Activated CD4-positive, alpha-beta T cell treated with anti-CD3 and anti-CD28 coated beads for 36 hours (primary cell): ENCODE measurements at regions of chr2 and their contacts with region 1.

Region 1: GRCh38 chr2:84856787-84857186 is 24.1 kb downstream of the TRABD2A start:
- DNase-seq: peak; percentile 69
- ATAC-seq: peak; percentile 82
- H3K4me3 Mint-ChIP-seq: peak overlapping the region; percentile 20
- H3K27ac Mint-ChIP-seq: peak overlapping the region; percentile 79
- H3K4me1 Mint-ChIP-seq: peaks cover 90% of the 10 kb centered on the region
- H3K27me3 Mint-ChIP-seq: no peaks in the 10 kb centered on the region

Region 2: GRCh38 chr2:84516234-84516986 is 340.4 kb before region 1 on chr2 and contains the start of gene DNAH6:
- CTCF ChIA-PET with region 1: no interaction called
- POLR2A ChIA-PET with region 1: no interaction called
- intact Hi-C with region 1: loop called in 1 of 2 experiments (anchors 5 kb)
- DNase-seq: peak; percentile 93
- ATAC-seq: peak; percentile 100
- H3K4me3 Mint-ChIP-seq: peak within 1 kb of the TSS; percentile 72
- H3K27ac Mint-ChIP-seq: peak within 1 kb of the TSS; percentile 30
- H3K4me1 Mint-ChIP-seq: peaks cover 11% of the 10 kb centered on the region
- H3K27me3 Mint-ChIP-seq: no peaks in the 10 kb centered on the region
- total RNA-seq, gene DNAH6: 1.1 to 1.3 TPM

Region 3: DNA sequence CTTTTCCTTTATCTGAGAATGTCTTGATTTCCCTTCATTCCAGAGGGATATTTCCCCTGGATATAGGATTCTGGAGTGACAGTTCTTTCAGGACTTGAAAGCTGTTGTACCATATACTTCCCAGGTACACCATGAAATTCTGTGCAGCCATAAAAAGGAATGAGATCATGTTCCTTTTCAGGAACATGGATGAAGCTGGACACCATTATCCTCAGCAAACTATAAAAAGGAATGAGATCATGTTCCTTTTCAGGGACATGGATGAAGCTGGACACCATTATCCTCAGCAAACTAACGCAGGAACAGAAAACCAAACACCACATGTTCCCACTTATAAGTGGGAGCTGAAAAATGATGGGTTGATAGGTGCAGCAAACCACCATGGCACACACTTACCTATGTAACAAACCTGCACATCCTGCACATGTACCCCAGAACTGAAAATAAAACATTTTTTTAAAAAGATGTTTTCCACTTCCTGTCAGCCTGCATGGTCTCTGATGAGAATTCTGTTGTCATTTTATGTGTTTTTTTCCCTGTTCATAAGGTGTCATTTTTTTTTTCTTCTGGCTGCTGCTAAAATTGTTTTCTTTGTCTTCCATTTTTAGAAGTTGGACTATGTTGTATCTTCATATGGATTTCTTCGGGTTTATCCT is 207.2 kb before region 1 on chr2:
- CTCF ChIA-PET with region 1: no interaction called
- POLR2A ChIA-PET with region 1: no interaction called
- intact Hi-C with region 1: loop called (anchors 5 to 10 kb)
- DNase-seq: no peak
- ATAC-seq: peak; percentile 40
- H3K4me3 Mint-ChIP-seq: peak overlapping the region; percentile 22
- H3K27ac Mint-ChIP-seq: peak overlapping the region; percentile 56
- H3K4me1 Mint-ChIP-seq: peaks cover 74% of the 10 kb centered on the region
- H3K27me3 Mint-ChIP-seq: no peaks in the 10 kb centered on the region

Region 4: GRCh38 chr2:84732897-84733778 is 123.6 kb before region 1 on chr2:
- CTCF ChIA-PET with region 1: no interaction called
- POLR2A ChIA-PET with region 1: no interaction called
- intact Hi-C with region 1: loop called in 1 of 2 experiments (anchors 5 kb)
- DNase-seq: no peak
- ATAC-seq: no peak
- H3K4me3 Mint-ChIP-seq: no peak overlapping the region
- H3K27ac Mint-ChIP-seq: no peak overlapping the region
- H3K4me1 Mint-ChIP-seq: peaks cover 14% of the 10 kb centered on the region
- H3K27me3 Mint-ChIP-seq: no peaks in the 10 kb centered on the region

Region 5: GRCh38 chr2:84817239-84817655 is 39.5 kb before region 1 on chr2:
- CTCF ChIA-PET with region 1: interaction called, 4 read pairs
- POLR2A ChIA-PET with region 1: no interaction called
- intact Hi-C with region 1: loop called (anchors 2 to 5 kb)
- DNase-seq: peak; percentile 36
- ATAC-seq: peak; percentile 85
- H3K4me3 Mint-ChIP-seq: peak overlapping the region; percentile 20
- H3K27ac Mint-ChIP-seq: no peak overlapping the region
- H3K4me1 Mint-ChIP-seq: peaks cover 52% of the 10 kb centered on the region
- H3K27me3 Mint-ChIP-seq: no peaks in the 10 kb centered on the region

Region 6: GRCh38 chr2:84840306-84840705 is 16.5 kb before region 1 on chr2:
- CTCF ChIA-PET with region 1: interaction called, 7 read pairs
- POLR2A ChIA-PET with region 1: no interaction called
- intact Hi-C with region 1: loop called in 1 of 2 experiments (anchors 2 kb)
- DNase-seq: no peak
- ATAC-seq: peak; percentile 23
- H3K4me3 Mint-ChIP-seq: peak overlapping the region; percentile 62
- H3K27ac Mint-ChIP-seq: peak overlapping the region; percentile 88
- H3K4me1 Mint-ChIP-seq: peaks cover 84% of the 10 kb centered on the region
- H3K27me3 Mint-ChIP-seq: no peaks in the 10 kb centered on the region